Heart left ventricle (tissue), 16 donors: ENCODE measurements at regions of chr2 and their contacts with region 1.

Region 1: DNA sequence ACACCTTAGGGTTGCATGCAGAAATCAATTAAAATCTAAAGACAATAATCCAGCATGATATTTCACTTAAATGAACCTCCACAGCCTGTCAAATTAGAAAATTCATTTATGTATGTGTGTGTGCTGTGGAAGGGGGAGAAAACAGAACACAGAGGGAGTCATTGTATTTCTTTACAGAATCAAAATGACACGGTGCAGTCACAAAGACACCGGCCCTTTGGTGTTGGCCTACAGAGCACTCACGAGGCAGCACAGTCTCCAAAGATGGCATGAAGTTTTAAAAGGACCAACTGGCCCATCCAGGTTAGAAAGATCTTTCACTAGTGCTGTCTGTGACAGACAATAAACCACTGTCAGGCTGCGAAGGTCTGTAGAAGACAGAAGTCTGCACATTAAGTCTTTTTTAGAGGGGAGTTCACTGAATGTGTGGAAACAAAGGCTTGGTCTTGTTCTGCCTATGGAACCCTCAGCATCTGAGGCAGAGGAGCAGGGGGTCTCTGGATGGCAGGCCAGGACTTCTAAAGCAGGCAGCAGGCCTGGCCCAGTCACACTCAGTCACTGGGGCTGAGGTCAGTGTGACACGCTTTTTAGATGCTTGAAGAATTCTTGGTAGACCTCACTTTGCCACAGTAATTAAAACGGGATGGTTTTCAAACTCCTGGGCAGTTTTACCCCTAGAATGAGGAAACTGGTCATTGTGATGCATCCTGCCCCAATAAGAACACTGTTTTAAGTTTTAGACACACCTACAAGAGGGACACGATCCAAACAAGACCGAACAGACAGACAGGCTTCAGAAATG is 184.9 kb downstream of the AFF3 start:
- DNase-seq: no peak
- ATAC-seq: no peak
- H3K4me3 ChIP-seq: no peak overlapping the region
- H3K27ac ChIP-seq: no peak overlapping the region
- H3K4me1 ChIP-seq: peaks cover 0 to 21% (median 5%) of the 10 kb centered on the region in 12 donors
- H3K27me3 ChIP-seq: no peaks in the 10 kb centered on the region
- CTCF ChIP-seq: no peak
- POLR2A ChIP-seq: no peak

Region 2: GRCh38 chr2:99940963-99941362 is 16.6 kb before region 1 on chr2:
- intact Hi-C with region 1: loop called in 1 of 10 experiments (anchors 1 kb)
- DNase-seq: peak in 1 of 5 donors; percentile 15
- ATAC-seq: peak; percentile 62 to 74 (median 68)
- H3K4me3 ChIP-seq: no peak overlapping the region
- H3K27ac ChIP-seq: no peak overlapping the region
- H3K4me1 ChIP-seq: peaks cover 0 to 23% (median 2%) of the 10 kb centered on the region in 12 donors
- H3K27me3 ChIP-seq: no peaks in the 10 kb centered on the region
- CTCF ChIP-seq: no peak
- POLR2A ChIP-seq: no peak